ENCODE measurements at regions of chr14 and their contacts with region 1.

Region 1: GRCh38 chr14:20613094-20614037 is 22.2 kb upstream of the RNASE12 start:
- DNase-seq: peak in 1 of 2 donors; percentile 98
- H3K4me3 ChIP-seq: peak overlapping the region; percentile 50 to 64
- H3K27ac ChIP-seq: peak overlapping the region; percentile 82
- H3K4me1 ChIP-seq: peaks cover 18% of the 10 kb centered on the region
- H3K27me3 ChIP-seq: no peaks in the 10 kb centered on the region
- CTCF ChIP-seq: peak; percentile 51 to 94 (median 56)
- POLR2A ChIP-seq: no peak

Region 2: DNA sequence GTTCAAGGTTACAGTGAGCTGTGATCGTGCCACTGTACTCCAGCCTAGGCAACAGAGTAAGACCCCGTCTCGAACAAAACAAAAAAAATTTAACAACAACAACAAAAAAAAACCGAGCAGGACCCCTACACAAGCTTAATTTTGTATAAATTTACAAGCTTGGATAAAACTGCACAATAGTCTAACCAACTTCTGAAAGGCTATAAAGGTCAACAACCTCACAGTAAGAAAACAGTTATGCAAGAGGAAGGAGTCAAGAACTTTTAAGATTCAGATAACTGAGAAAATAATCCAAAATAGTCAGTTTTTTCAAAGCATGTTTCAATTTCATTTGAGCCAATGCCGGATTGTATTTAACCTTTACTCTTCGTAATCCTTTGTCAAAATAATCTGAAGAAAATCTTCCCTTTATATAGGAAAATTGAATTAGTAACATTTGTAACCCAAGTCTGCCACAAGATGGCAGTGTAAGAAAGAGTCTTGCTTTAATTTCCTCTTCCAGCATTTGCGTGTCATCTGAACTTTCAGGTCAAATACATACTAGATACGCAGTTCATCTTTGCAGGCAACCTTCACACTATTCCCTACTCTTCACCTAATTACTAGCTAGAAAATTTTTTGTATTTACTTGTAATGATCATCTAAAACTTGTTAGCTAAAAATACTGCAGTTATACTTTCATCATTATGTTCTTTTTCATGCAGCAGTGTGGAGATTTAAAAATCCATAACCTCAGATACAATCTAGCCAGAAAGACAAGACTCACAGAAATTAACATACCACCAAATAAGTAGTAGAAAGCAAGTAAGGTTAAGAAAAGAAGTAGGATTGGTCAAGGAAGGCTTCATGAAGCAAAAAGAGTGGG is 286.1 kb before region 1 on chr14:
- intact Hi-C with region 1: loop called (anchors 5 kb)
- DNase-seq: no peak
- H3K4me3 ChIP-seq: no peak overlapping the region
- H3K27ac ChIP-seq: peak overlapping the region; percentile 42
- H3K4me1 ChIP-seq: peaks cover 24% of the 10 kb centered on the region
- H3K27me3 ChIP-seq: no peaks in the 10 kb centered on the region
- CTCF ChIP-seq: peak; percentile 64 to 74 (median 65)
- POLR2A ChIP-seq: no peak

Region 3: DNA sequence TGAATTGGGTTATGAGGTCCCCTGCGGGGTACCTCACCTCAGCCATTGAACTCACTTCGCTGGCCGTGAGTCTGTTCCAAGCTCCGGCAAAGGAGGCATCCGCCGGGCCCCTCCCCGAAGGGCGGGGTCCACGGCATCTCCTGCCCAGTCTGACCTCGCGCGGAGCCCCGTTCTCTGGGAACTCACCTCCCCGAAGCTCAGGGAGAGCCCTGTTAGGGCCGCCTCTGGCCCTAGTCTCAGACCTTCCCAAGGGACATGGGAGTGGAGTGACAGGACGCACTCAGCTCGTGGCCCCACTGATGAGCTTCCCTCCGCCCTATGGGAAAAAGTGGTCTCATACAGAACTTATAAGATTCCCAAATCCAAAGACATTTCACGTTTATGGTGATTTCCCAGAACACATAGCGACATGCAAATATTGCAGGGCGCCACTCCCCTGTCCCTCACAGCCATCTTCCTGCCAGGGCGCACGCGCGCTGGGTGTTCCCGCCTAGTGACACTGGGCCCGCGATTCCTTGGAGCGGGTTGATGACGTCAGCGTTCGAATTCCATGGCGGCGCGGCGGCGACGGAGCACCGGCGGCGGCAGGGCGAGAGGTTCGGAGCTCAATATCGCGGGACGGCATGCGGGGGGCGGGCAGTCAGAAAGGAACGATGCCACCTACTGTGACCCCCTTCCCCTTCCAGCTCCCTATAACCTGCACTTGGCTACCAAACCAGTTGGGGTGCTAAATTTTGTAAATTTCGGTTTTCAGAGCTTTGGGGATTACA is 270.1 kb before region 1 on chr14 and contains the start of gene PARP2:
- intact Hi-C with region 1: loop called (anchors 5 kb)
- DNase-seq: peak; percentile 98 to 99
- H3K4me3 ChIP-seq: peak within 1 kb of the TSS; percentile 66 to 86
- H3K27ac ChIP-seq: peak within 1 kb of the TSS; percentile 96
- H3K4me1 ChIP-seq: peaks cover 6% of the 10 kb centered on the region
- H3K27me3 ChIP-seq: no peaks in the 10 kb centered on the region
- CTCF ChIP-seq: no peak
- POLR2A ChIP-seq: peak in 1 of 2 donors; percentile 90
- total RNA-seq, gene PARP2: 5.9 TPM

Region 4: GRCh38 chr14:20413045-20413799 is 200.1 kb before region 1 on chr14 and contains the start of gene TEP1:
- intact Hi-C with region 1: loop called (anchors 10 kb)
- DNase-seq: no peak
- H3K4me3 ChIP-seq: peak within 1 kb of the TSS; percentile 67 to 72
- H3K27ac ChIP-seq: peak within 1 kb of the TSS; percentile 90
- H3K4me1 ChIP-seq: peaks cover 26% of the 10 kb centered on the region
- H3K27me3 ChIP-seq: no peaks in the 10 kb centered on the region
- CTCF ChIP-seq: no peak
- POLR2A ChIP-seq: peak in 1 of 2 donors; percentile 27
- total RNA-seq, gene TEP1: 24.6 TPM

Region 5: DNA sequence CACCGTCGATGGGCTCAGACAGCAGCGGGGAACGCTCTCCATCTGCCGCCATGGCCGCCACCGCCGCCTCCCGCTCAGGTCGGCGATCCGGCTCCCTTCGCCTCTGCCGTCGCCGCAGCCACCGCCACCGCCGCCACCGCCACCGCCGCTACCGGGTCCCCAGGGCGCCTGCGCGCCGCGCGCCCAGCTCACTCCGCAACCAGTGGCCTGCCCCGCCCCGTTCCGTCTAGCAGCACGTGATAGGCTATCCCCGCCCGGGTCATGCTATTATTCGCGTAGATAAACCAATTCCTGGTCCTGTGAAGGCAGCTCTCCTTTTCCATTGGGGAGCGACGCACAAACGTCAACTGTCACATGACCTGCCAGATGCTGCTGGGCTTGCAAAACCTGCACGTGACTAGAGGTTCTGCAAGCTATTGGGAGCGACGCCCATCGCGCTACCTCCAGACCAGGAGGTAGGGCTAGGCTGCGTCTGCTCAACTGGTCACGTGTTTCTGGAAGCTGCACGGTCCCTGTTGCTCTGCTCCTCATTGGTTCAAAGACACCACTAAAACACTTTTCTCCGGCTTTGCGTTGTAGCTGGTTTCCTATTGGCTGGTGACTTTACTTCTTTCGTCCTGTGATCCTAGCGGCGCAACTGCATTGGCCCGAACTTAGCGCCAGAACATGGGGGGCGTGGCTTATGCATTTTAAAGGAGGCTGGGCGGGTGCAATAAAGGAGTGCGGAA is 151.9 kb before region 1 on chr14 and contains the start of gene PIP4P1:
- intact Hi-C with region 1: loop called (anchors 10 kb)
- DNase-seq: peak; percentile 100
- H3K4me3 ChIP-seq: peak within 1 kb of the TSS; percentile 88 to 98
- H3K27ac ChIP-seq: peak within 1 kb of the TSS; percentile 98
- H3K4me1 ChIP-seq: peaks cover 39% of the 10 kb centered on the region
- H3K27me3 ChIP-seq: no peaks in the 10 kb centered on the region
- CTCF ChIP-seq: peak in 1 of 3 experiments; percentile 16
- POLR2A ChIP-seq: peak in 1 of 2 donors; percentile 90
- total RNA-seq, gene PIP4P1: 24.1 TPM

Measured in vagina (tissue), 2 donors.